ENCODE measurements at regions of chr7 and their contacts with region 1.

Region 1: DNA sequence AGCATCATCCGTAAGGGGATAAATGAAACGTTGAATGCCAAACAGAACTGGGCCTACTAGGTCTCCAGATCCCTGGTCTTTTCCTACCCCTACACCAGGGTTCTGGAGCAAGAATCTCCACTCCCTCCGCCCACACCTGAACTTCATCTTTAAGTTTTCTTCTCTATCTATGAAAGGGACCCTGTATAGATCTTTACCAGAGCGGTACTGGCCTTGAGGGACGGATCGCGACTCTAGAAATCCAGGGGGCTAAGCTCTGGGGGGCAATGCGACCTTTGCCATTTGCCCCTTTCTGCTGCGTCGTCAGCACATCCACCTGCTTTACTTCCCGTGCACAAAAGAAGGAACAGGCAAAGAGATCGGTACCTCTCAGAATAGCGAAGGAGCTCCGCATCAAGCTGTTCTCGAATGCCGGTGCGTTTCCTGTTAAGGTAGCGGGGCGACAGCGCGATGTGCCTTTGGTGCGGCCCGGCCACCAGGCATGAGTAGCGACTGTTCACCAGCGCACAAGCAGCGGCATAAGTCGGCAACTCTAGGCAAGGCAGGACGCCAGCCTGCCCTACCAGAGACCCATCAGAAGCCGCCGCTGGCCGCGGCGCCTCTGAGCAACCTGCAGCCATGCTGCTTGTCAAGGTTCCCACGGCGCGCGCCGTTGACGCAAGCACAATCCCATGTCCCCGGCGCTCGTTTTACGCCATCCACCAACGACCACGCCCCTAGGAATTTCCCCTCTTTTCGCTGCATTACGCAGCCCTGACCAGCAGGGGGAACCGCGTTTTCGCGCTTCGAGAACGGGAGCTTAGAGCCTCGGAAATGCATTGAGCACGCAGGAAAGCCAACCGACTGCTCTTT is at the start of gene POLR1F:
- DNase-seq: peak; percentile 95
- H3K4me3 Mint-ChIP-seq: peak within 1 kb of the TSS; percentile 87
- H3K27ac Mint-ChIP-seq: peak within 1 kb of the TSS; percentile 68
- H3K4me1 Mint-ChIP-seq: peaks cover 46% of the 10 kb centered on the region
- H3K27me3 Mint-ChIP-seq: no peaks in the 10 kb centered on the region
- total RNA-seq, gene POLR1F: 18.8 to 20.3 TPM

Region 2: GRCh38 chr7:17940302-17940883 is 1768.2 kb before region 1 on chr7 and contains the start of gene SNX13:
- CTCF ChIA-PET with region 1: no interaction called
- intact Hi-C with region 1: loop called (anchors 2 kb)
- DNase-seq: peak; percentile 91
- H3K4me3 Mint-ChIP-seq: peak within 1 kb of the TSS; percentile 99
- H3K27ac Mint-ChIP-seq: peak within 1 kb of the TSS; percentile 92
- H3K4me1 Mint-ChIP-seq: peaks cover 41% of the 10 kb centered on the region
- H3K27me3 Mint-ChIP-seq: no peaks in the 10 kb centered on the region
- total RNA-seq, gene SNX13: 19.5 to 20.3 TPM

Region 3: GRCh38 chr7:19754521-19755116 is 46.0 kb after region 1 on chr7:
- CTCF ChIA-PET with region 1: no interaction called
- intact Hi-C with region 1: loop called (anchors 2 kb)
- DNase-seq: no peak
- H3K4me3 Mint-ChIP-seq: no peak overlapping the region
- H3K27ac Mint-ChIP-seq: no peak overlapping the region
- H3K4me1 Mint-ChIP-seq: no peaks in the 10 kb centered on the region
- H3K27me3 Mint-ChIP-seq: peaks cover 8% of the 10 kb centered on the region

Region 4: DNA sequence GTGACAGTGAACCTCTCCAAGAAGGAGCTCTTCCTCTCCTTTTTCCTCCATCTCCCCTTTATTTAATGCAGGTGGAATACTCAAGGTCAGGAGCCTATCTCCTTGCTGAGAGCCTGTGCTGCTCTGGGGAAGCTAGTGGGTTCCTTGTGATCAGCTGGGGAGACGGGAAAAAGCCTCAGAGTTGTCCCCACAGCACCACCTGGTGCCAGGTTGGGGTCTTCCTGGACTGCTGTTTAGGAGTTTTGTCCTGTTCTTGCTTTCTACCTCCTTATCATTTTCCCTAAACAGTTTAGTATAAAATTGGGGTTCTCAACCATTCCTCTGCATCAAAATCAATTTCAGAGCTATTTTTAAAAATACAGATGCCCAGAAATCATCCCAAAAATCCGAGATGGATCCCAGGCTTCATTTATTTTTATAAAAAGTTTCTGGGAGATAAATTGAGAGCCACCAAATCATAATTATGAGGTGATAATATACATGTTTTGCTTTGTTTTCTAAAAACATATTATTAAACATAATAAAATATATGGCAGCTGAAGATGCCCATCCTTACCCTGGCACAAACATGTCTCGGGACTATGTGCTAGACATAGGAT is 464.2 kb after region 1 on chr7:
- CTCF ChIA-PET with region 1: interaction called, 7 read pairs
- intact Hi-C with region 1: loop called (anchors 1 kb)
- DNase-seq: peak; percentile 39
- H3K4me3 Mint-ChIP-seq: no peak overlapping the region
- H3K27ac Mint-ChIP-seq: no peak overlapping the region
- H3K4me1 Mint-ChIP-seq: no peaks in the 10 kb centered on the region
- H3K27me3 Mint-ChIP-seq: no peaks in the 10 kb centered on the region

Region 5: GRCh38 chr7:20330240-20330927 is 621.8 kb after region 1 on chr7 and contains the start of gene ITGB8:
- CTCF ChIA-PET with region 1: interaction called, 3 read pairs
- intact Hi-C with region 1: loop called (anchors 5 kb)
- DNase-seq: peak; percentile 75
- H3K4me3 Mint-ChIP-seq: peak within 1 kb of the TSS; percentile 74
- H3K27ac Mint-ChIP-seq: no peak within 1 kb of the TSS
- H3K4me1 Mint-ChIP-seq: peaks cover 18% of the 10 kb centered on the region
- H3K27me3 Mint-ChIP-seq: peaks cover 46% of the 10 kb centered on the region
- total RNA-seq, gene ITGB8: not detected

Region 6: DNA sequence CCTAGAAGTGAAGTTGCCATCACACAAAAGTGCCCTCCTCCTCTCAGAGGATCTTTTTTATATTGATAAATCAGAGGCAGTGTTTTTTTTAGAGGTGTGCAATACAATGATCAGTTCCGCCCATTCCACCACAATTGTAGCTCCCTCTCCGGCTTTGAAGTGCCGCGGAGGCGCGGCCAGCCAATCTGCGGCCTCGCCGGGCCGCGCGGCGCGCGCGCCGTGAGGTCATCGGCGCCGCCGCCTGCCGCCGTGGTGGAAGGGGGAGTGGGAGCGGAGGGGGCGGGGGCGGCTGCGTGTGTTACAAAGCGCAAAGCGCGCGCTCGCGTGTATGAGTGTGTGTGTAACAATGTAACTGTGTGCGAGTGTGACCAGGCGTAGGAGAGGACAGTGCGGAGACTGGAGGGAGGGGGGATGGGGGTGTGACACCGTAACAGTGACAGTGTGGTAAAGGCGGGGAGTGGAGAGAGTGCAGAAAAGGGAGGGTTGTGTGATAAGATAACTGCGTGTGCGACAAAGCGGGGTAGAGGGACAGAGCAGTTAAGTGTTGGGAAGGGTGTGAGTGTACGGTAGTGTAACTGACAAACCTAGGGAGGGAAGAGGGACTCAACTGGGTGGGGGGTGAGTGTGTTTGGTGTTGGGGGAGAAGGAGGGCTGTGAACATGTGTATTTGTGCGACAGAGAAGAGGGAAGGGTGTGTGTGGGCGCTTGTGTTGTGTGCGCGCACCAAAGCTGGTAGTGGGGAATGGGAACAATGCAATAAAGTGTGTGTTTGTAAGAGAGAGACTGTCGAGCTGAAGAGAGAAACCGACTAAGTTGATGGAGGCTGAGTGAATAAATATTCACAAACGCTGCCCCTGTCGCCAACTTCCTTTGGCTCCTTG is 1078.4 kb after region 1 on chr7 and contains the start of gene SP8:
- CTCF ChIA-PET with region 1: no interaction called
- intact Hi-C with region 1: loop called (anchors 10 kb)
- DNase-seq: peak; percentile 38
- H3K4me3 Mint-ChIP-seq: peak within 1 kb of the TSS; percentile 69
- H3K27ac Mint-ChIP-seq: no peak within 1 kb of the TSS
- H3K4me1 Mint-ChIP-seq: peaks cover 27% of the 10 kb centered on the region
- H3K27me3 Mint-ChIP-seq: peaks cover 75% of the 10 kb centered on the region
- total RNA-seq, gene SP8: 0.07 TPM in 1 of 2 experiments, not detected in the other